ENCODE measurements at regions of chr4 and their contacts with region 1.

Region 1: GRCh38 chr4:39697740-39698423 is at the start of gene UBE2K:
- DNase-seq: peak; percentile 73 to 95 (median 87)
- ATAC-seq: peak; percentile 82
- H3K4me3 ChIP-seq: peak within 1 kb of the TSS; percentile 97 to 100
- H3K4me3 Mint-ChIP-seq: peak within 1 kb of the TSS; percentile 99
- H3K27ac ChIP-seq: peak within 1 kb of the TSS; percentile 85 to 95
- H3K27ac Mint-ChIP-seq: peak within 1 kb of the TSS; percentile 99
- H3K4me1 ChIP-seq: peaks cover 39% of the 10 kb centered on the region
- H3K4me1 Mint-ChIP-seq: peaks cover 44% of the 10 kb centered on the region
- H3K27me3 ChIP-seq: no peaks in the 10 kb centered on the region
- H3K27me3 Mint-ChIP-seq: no peaks in the 10 kb centered on the region
- CTCF ChIP-seq: no peak
- total RNA-seq, gene UBE2K: 33.1 to 35.8 TPM

Region 2: DNA sequence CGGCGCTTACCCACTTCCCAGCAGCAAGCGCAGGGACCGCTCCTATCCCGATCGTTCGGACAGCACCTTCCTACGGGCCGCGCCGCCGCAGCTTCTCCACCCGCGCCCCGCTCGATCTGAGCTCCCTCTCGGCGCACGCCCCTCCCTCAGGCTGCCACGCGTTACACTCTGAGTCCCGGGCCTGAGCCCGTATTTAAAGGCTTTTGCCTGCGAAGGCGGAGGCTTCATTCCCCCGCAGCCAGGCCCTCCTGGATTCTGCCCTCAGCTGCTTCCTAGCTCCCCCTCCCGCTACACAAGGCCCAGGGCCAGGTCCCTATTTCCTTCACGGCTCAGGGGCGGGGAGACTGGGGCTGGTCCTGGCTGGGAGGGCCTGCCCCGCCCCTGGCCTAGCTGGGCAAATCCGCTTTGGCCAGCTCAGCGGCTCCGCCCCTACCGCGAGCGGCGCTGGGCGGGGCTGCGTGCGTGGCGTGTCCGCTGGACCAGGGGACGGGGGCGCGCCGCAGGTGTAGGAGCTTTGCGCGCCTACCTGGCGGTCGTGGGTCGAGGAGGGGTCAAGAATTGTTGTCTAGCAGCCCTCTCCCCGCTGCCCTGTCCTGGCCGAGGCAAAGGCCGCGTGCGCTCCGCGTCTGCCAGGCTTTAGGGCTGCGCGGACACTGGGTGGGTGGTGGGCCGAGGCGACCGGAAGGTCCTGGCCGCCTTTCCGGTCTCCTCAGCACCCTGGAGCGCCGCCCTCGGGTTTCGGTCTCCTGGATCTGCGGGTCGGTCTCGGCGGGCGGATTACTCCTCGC is 170.4 kb before region 1 on chr4 and contains the start of gene UGDH:
- CTCF ChIA-PET with region 1: no interaction called
- POLR2A ChIA-PET with region 1: interaction called, 3 read pairs
- intact Hi-C with region 1: loop called in 1 of 2 experiments (anchors 1 kb)
- DNase-seq: peak; percentile 81 to 96 (median 90)
- ATAC-seq: peak; percentile 98
- H3K4me3 ChIP-seq: peak within 1 kb of the TSS; percentile 87 to 89
- H3K4me3 Mint-ChIP-seq: peak within 1 kb of the TSS; percentile 96
- H3K27ac ChIP-seq: peak within 1 kb of the TSS; percentile 68 to 74
- H3K27ac Mint-ChIP-seq: peak within 1 kb of the TSS; percentile 93
- H3K4me1 ChIP-seq: peaks cover 17% of the 10 kb centered on the region
- H3K4me1 Mint-ChIP-seq: peaks cover 24% of the 10 kb centered on the region
- H3K27me3 ChIP-seq: no peaks in the 10 kb centered on the region
- H3K27me3 Mint-ChIP-seq: no peaks in the 10 kb centered on the region
- CTCF ChIP-seq: no peak
- total RNA-seq, gene UGDH: 2.6 to 3.6 TPM

Region 3: DNA sequence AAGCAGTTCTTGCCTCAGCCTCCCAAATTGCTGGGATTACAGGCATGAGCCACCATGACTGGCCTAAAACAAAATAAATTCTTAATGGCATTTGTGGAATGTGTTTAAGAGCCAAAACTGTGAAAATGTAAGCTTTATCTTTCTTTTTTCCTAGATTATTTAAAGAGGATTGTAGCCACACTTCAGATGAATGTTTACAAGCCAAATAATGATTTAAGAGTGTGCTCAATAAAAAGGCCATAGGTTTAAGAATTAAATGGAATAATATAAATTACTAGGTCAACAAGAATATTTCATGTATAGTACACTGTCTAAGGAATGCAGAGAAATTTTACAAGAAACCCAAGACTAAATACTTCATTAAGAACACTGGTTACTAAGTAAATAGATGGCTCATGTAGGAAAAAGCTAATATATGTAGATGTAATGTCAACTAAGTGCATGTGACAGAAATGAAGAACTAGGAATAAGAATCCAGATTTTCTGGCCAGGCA is 149.4 kb before region 1 on chr4:
- CTCF ChIA-PET with region 1: no interaction called
- POLR2A ChIA-PET with region 1: no interaction called
- intact Hi-C with region 1: no loop called
- DNase-seq: no peak
- ATAC-seq: no peak
- H3K4me3 ChIP-seq: no peak overlapping the region
- H3K4me3 Mint-ChIP-seq: no peak overlapping the region
- H3K27ac ChIP-seq: no peak overlapping the region
- H3K27ac Mint-ChIP-seq: no peak overlapping the region
- H3K4me1 ChIP-seq: no peaks in the 10 kb centered on the region
- H3K4me1 Mint-ChIP-seq: no peaks in the 10 kb centered on the region
- H3K27me3 ChIP-seq: no peaks in the 10 kb centered on the region
- H3K27me3 Mint-ChIP-seq: no peaks in the 10 kb centered on the region
- CTCF ChIP-seq: no peak

Region 4: DNA sequence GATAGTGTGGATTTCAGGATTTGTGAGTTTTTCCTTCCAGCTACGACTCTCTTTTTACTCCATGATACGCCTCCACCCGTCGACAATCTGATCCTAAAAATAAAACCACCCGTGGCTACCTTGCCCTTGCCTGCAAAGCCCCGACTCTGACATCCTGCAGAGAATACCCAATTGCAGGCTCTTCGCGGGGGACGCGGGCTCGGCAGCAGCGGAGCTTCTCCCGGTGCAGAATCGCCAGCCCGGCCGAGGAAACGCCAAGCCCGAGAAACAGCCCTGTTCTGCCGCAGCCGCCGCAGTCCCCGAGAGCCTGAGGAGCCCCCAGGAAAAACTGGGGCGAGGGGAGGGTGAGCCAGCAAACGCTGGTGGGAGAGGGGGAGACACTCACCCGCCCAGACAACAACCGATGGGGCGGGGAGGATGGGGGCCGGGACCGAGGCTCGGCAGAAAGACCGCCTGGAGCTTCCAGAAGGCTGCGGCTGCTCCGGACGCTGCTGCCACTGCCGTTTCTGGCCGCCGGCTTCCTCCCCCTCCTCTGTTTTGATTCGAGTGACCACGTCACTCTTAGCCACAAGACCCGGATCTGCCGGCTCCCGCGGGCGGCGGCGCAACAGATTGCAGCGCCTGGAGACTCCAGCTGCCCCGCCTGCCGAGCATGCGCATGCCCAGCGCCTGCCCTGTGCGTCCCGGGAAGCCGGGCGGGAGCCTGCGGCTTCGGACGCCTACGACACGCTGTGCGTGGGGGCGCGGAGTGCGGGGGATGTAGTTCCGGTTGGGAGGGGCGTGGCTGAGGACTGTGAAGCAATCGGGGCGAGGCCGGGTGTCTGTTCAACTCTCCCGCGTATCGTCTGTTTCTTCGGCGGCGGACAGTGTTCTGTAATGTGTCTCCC is 59.3 kb before region 1 on chr4 and contains the start of gene SMIM14:
- CTCF ChIA-PET with region 1: interaction called, 6 read pairs
- POLR2A ChIA-PET with region 1: interaction called, 16 read pairs
- intact Hi-C with region 1: loop called (anchors 2 kb)
- DNase-seq: peak; percentile 72 to 95 (median 90)
- ATAC-seq: peak; percentile 83
- H3K4me3 ChIP-seq: peak within 1 kb of the TSS; percentile 62 to 97
- H3K4me3 Mint-ChIP-seq: peak within 1 kb of the TSS; percentile 90
- H3K27ac ChIP-seq: peak within 1 kb of the TSS; percentile 63 to 91
- H3K27ac Mint-ChIP-seq: peak within 1 kb of the TSS; percentile 96
- H3K4me1 ChIP-seq: peaks cover 18% of the 10 kb centered on the region
- H3K4me1 Mint-ChIP-seq: peaks cover 44% of the 10 kb centered on the region
- H3K27me3 ChIP-seq: no peaks in the 10 kb centered on the region
- H3K27me3 Mint-ChIP-seq: no peaks in the 10 kb centered on the region
- CTCF ChIP-seq: no peak
- total RNA-seq, gene SMIM14: 1.4 TPM

Region 5: GRCh38 chr4:39715788-39716187 is 17.9 kb after region 1 on chr4:
- CTCF ChIA-PET with region 1: no interaction called
- POLR2A ChIA-PET with region 1: no interaction called
- intact Hi-C with region 1: loop called in 1 of 2 experiments (anchors 2 kb)
- DNase-seq: no peak
- ATAC-seq: no peak
- H3K4me3 ChIP-seq: no peak overlapping the region
- H3K4me3 Mint-ChIP-seq: no peak overlapping the region
- H3K27ac ChIP-seq: no peak overlapping the region
- H3K27ac Mint-ChIP-seq: no peak overlapping the region
- H3K4me1 ChIP-seq: peaks cover 27% of the 10 kb centered on the region
- H3K4me1 Mint-ChIP-seq: peaks cover 63% of the 10 kb centered on the region
- H3K27me3 ChIP-seq: no peaks in the 10 kb centered on the region
- H3K27me3 Mint-ChIP-seq: no peaks in the 10 kb centered on the region
- CTCF ChIP-seq: no peak

Region 6: DNA sequence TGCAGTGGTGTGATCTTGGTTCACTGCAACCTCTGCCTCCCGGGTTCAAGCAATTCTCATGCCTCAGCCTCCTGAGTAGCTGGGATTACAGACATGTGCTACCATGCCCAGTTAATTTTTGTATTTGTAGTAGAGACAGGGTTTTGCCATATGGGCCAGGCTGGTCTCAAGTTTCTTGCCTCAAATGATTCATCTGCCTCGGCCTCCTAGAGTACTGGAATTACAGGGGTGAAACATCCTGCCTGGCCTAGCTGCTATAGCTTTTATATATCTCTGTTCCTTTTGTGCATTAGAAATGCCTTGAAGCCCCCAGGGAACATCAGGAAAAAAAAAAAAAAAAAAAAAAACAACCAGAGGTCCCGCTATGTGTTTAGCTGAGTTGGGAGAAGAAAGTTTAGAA is 34.8 kb after region 1 on chr4:
- CTCF ChIA-PET with region 1: interaction called, 4 read pairs
- POLR2A ChIA-PET with region 1: no interaction called
- intact Hi-C with region 1: loop called in 1 of 2 experiments (anchors 5 kb)
- DNase-seq: no peak
- ATAC-seq: no peak
- H3K4me3 ChIP-seq: no peak overlapping the region
- H3K4me3 Mint-ChIP-seq: no peak overlapping the region
- H3K27ac ChIP-seq: no peak overlapping the region
- H3K27ac Mint-ChIP-seq: no peak overlapping the region
- H3K4me1 ChIP-seq: no peaks in the 10 kb centered on the region
- H3K4me1 Mint-ChIP-seq: peaks cover 38% of the 10 kb centered on the region
- H3K27me3 ChIP-seq: no peaks in the 10 kb centered on the region
- H3K27me3 Mint-ChIP-seq: no peaks in the 10 kb centered on the region
- CTCF ChIP-seq: no peak

Region 7: DNA sequence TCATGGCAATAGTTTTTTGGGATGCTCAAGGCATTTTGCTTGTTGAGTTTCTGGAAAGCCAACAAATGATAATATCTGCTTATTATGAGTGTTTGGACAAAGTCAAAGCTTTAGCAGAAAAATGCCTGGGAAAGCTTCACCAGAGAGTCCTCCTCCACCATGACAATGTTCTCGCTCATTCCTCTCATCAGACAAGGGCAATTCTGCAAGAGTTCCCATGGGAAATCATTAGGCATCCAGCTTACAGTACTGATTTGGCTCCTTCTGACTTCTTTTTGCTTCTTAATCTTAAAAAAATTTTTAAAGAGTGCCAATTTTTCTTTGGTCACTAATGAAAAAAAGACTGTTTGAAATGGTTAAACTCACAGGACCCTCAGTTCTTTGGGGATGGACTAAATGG is 136.4 kb after region 1 on chr4:
- CTCF ChIA-PET with region 1: interaction called, 3 read pairs
- POLR2A ChIA-PET with region 1: no interaction called
- intact Hi-C with region 1: loop called in 1 of 2 experiments (anchors 10 kb)
- DNase-seq: no peak
- ATAC-seq: no peak
- H3K4me3 ChIP-seq: no peak overlapping the region
- H3K4me3 Mint-ChIP-seq: no peak overlapping the region
- H3K27ac ChIP-seq: no peak overlapping the region
- H3K27ac Mint-ChIP-seq: no peak overlapping the region
- H3K4me1 ChIP-seq: no peaks in the 10 kb centered on the region
- H3K4me1 Mint-ChIP-seq: no peaks in the 10 kb centered on the region
- H3K27me3 ChIP-seq: no peaks in the 10 kb centered on the region
- H3K27me3 Mint-ChIP-seq: no peaks in the 10 kb centered on the region
- CTCF ChIP-seq: no peak

Region 8: GRCh38 chr4:40020221-40020943 is 322.5 kb after region 1 on chr4:
- CTCF ChIA-PET with region 1: no interaction called
- POLR2A ChIA-PET with region 1: no interaction called
- intact Hi-C with region 1: no loop called
- DNase-seq: no peak
- ATAC-seq: no peak
- H3K4me3 ChIP-seq: no peak overlapping the region
- H3K4me3 Mint-ChIP-seq: no peak overlapping the region
- H3K27ac ChIP-seq: no peak overlapping the region
- H3K27ac Mint-ChIP-seq: no peak overlapping the region
- H3K4me1 ChIP-seq: no peaks in the 10 kb centered on the region
- H3K4me1 Mint-ChIP-seq: no peaks in the 10 kb centered on the region
- H3K27me3 ChIP-seq: no peaks in the 10 kb centered on the region
- H3K27me3 Mint-ChIP-seq: no peaks in the 10 kb centered on the region
- CTCF ChIP-seq: no peak

Region 9: GRCh38 chr4:41241919-41242318 is 1544.0 kb after region 1 on chr4:
- CTCF ChIA-PET with region 1: no interaction called
- POLR2A ChIA-PET with region 1: no interaction called
- intact Hi-C with region 1: no loop called
- DNase-seq: no peak
- ATAC-seq: no peak
- H3K4me3 ChIP-seq: no peak overlapping the region
- H3K4me3 Mint-ChIP-seq: no peak overlapping the region
- H3K27ac ChIP-seq: no peak overlapping the region
- H3K27ac Mint-ChIP-seq: no peak overlapping the region
- H3K4me1 ChIP-seq: no peaks in the 10 kb centered on the region
- H3K4me1 Mint-ChIP-seq: no peaks in the 10 kb centered on the region
- H3K27me3 ChIP-seq: no peaks in the 10 kb centered on the region
- H3K27me3 Mint-ChIP-seq: peaks cover 9% of the 10 kb centered on the region
- CTCF ChIP-seq: no peak